Left ventricle myocardium superior (tissue), 1 donor: ENCODE measurements at regions of chr5 and their contacts with region 1.

Region 1: DNA sequence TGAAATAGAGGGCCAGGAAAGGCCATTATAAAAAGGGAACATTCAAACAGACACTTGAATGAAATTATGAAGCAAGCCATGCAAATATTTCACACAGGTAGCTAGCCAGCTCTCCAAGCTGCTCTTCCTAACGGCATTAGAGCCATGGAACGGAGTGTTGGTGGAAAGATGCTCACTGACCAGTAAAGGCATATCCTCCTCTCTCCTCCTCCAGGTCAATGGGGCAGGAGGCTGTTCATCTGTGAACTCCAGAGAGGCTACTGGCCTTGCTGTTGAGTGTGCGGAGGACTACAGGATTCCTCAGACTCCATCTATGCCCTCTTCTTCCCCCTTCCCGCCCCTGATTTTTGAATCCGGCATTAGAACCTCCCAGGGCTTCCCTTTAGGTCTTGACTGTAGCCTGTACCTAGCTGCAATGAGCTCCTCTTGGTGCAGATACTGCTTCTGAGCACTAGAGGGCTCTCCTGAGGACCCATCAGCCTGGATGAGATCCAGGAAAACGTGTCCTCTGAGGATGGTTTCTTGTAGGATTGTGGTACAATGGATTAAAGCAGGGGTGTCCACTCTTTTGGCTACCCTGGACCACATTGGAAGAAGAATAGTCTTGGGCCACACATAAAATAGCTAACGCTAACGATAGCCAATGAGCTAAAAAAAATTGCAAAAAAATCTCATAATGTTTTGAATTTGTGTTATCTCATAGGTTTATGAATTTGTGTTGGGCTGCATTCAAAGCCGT is 162.2 kb downstream of the SREK1 start:
- DNase-seq: no peak
- ATAC-seq: peak; percentile 84

Region 2: GRCh38 chr5:66757188-66757833 is 451.0 kb after region 1 on chr5:
- intact Hi-C with region 1: loop called (anchors 5 kb)
- DNase-seq: peak; percentile 36
- ATAC-seq: peak; percentile 79

Region 3: DNA sequence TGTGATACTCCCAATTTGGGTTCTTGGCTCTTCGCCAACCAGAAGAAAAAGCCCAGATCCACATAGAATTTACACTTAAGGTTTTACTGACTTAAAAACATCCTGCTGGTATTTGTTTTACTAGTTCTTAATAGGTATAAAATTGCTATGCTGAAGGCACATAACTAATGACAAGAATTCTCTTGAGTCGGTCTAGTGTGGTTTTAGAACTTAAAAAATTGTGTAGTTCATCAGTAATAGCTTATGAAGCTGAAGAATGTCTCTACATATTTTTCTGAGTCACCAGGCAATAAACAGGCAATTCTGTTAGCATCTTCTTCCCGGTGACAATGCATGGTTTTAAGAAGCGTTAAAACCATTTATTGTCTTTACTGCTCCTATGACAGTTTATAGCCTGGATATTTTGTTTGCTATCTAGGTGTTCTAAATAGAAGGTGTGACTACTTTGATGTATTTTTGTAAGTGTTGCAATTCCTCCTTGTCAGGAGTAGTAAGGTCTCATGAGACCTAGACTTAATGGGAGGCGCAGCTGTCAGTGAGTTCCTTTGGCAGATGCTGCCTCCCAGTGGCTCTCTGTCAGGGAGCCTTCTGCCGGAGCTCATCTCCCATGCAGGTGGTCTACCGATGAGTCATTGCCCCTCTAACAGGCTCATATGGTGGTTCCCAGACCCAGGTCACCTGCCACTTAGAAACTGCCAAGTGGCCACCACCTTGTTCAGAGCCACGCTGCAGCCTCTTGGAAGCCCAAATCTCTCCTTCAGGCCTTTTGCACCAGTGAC is 463.8 kb after region 1 on chr5:
- intact Hi-C with region 1: loop called (anchors 5 kb)
- DNase-seq: peak; percentile 43
- ATAC-seq: peak; percentile 83